PC-9 (cell line): ENCODE measurements at regions of chr14 and their contacts with region 1.

Region 1: GRCh38 chr14:34461334-34462131 is 507 bp downstream of the SPTSSA start:
- DNase-seq: peak; percentile 32 to 49
- H3K4me3 ChIP-seq: peak overlapping the region; percentile 67
- H3K27ac ChIP-seq: no peak overlapping the region
- H3K4me1 ChIP-seq: peaks cover 10% of the 10 kb centered on the region
- H3K27me3 ChIP-seq: no peaks in the 10 kb centered on the region
- CTCF ChIP-seq: no peak

Region 2: DNA sequence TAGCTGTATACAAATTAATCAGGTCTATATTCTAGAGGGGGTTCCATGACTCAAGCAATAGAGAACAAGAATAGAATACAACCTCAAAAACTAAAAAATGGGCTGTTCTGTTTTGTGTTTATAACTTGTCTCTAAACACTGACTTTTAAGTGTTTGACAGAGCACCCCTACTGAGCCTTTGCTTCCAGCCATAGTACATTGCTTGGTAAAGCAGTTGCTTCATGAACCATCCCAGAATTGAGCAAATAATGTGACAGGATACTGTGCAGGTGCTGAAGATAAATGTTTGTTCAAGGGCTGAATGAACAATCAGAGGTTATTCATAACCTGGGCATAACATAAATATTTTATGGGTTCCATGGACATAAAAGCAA is 11.0 kb before region 1 on chr14:
- CTCF ChIA-PET with region 1: no interaction called
- POLR2A ChIA-PET with region 1: interaction called, 15 read pairs
- intact Hi-C with region 1: no loop called
- DNase-seq: peak in 1 of 2 experiments; percentile 46
- H3K4me3 ChIP-seq: no peak overlapping the region
- H3K27ac ChIP-seq: no peak overlapping the region
- H3K4me1 ChIP-seq: no peaks in the 10 kb centered on the region
- H3K27me3 ChIP-seq: no peaks in the 10 kb centered on the region
- CTCF ChIP-seq: no peak

Region 3: DNA sequence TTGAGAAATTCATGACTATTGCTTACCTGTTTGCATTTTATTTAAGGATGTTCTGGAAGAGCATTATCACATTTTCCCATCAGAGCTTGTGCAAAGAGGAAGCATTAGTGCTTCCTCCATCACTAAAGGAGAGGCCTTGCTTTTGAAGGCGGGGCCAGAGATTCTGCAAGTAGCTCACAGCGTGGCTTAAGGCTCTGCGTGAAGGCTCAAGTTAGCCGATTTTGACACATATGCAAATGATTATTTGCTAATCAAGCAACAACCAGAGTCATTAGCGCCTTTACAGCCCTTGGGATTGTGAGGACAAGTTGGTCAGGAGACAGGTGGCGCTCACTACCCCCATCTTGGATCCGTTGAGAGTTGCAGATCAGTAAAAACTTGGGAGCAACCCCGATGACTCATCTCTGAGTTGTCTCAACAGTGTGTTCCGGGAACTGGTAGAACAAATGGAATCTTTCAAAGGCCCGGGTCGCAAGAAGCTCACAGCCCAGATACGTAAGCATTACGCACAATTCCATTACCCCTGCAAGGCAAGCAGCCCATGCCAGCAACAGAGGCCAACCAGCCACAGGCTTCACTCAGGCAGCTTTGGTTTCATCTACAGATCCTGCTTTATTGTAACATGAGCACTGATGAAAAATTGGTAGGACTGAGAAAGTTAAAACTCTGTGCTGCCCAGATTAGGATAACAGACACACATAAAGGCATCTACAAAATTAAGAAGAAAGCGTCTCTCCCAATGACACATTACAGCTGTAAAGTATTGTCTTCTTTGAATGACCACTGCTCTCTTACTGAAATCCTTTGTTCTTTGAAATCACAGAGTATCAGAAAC is 35.4 kb after region 1 on chr14:
- CTCF ChIA-PET with region 1: no interaction called
- POLR2A ChIA-PET with region 1: no interaction called
- intact Hi-C with region 1: loop called (anchors 2 kb)
- DNase-seq: peak; percentile 70 to 89
- H3K4me3 ChIP-seq: peak overlapping the region; percentile 27; the same call in 1 of the 2 replicates
- H3K27ac ChIP-seq: peak overlapping the region; percentile 85
- H3K4me1 ChIP-seq: peaks cover 33% of the 10 kb centered on the region
- H3K27me3 ChIP-seq: no peaks in the 10 kb centered on the region
- CTCF ChIP-seq: no peak; the same call in 1 of the 2 replicates

Region 4: GRCh38 chr14:34604995-34605394 is 143.5 kb after region 1 on chr14:
- CTCF ChIA-PET with region 1: no interaction called
- POLR2A ChIA-PET with region 1: no interaction called
- intact Hi-C with region 1: no loop called
- DNase-seq: no peak
- H3K4me3 ChIP-seq: no peak overlapping the region
- H3K27ac ChIP-seq: no peak overlapping the region
- H3K4me1 ChIP-seq: no peaks in the 10 kb centered on the region
- H3K27me3 ChIP-seq: no peaks in the 10 kb centered on the region
- CTCF ChIP-seq: no peak

Region 5: DNA sequence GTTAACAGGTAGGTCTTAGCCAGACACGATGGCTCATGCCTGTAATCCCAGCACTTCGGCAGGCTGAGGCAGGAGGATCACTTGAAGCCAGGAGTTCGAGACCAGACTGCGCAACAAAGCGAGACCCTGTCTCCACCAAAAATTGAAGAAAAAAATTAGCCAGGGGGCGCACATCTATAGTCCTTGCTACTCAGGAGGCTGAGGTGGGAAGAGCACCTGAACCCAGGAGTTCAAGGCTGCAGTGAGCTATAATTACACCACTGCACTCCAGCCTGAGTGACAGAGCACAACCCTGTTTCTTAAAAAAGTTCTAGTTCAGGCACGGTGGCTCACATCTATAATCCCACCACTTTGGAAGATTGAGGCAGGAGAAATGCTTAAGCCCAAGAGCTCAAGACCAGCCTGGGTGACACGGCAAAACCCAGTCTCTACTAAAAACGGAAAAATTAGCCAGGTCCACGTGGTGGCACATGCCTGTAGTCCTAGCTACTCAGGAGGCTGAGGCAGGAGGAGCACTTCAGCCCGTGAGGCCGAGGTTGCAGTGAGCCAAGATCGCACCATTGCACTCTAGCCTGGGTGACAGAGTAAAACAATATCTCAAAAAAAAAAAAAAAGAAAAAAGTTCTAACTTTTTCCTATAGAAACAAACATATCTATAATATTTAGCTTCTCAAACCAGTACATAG is 404.5 kb after region 1 on chr14:
- CTCF ChIA-PET with region 1: no interaction called
- POLR2A ChIA-PET with region 1: no interaction called
- intact Hi-C with region 1: no loop called
- DNase-seq: no peak
- H3K4me3 ChIP-seq: no peak overlapping the region
- H3K27ac ChIP-seq: no peak overlapping the region
- H3K4me1 ChIP-seq: no peaks in the 10 kb centered on the region
- H3K27me3 ChIP-seq: no peaks in the 10 kb centered on the region
- CTCF ChIP-seq: no peak

Region 6: DNA sequence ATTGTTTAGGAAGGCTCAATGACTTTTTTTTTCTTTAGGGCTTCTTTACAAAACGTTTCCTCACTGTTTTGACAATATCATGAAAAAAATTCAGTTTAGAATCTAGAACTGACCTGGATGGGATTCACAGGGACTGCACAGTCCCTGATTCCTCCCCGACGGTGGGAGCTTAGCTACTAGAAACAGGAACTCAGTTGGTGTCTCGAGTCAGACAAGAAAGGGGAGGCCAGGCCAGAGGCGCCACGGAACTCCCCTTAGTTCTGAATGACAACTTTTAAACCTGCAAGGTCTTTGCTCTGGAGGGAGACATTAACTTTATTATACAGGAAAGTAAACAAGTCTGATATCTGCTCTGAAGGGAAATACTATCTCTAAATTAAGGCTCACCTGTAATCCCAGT is 475.9 kb after region 1 on chr14:
- CTCF ChIA-PET with region 1: no interaction called
- POLR2A ChIA-PET with region 1: interaction called, 16 read pairs
- intact Hi-C with region 1: no loop called
- DNase-seq: no peak
- H3K4me3 ChIP-seq: no peak overlapping the region
- H3K27ac ChIP-seq: no peak overlapping the region
- H3K4me1 ChIP-seq: no peaks in the 10 kb centered on the region
- H3K27me3 ChIP-seq: no peaks in the 10 kb centered on the region
- CTCF ChIP-seq: no peak